Calu3 (cell line): ENCODE measurements at regions of chr10 and their contacts with region 1.

Region 1: GRCh38 chr10:5199398-5199797 is 2.8 kb downstream of the AKR1C4 start:
- DNase-seq: no peak
- H3K4me3 Mint-ChIP-seq: no peak overlapping the region
- H3K27ac Mint-ChIP-seq: no peak overlapping the region
- H3K4me1 Mint-ChIP-seq: peaks cover 18% of the 10 kb centered on the region
- H3K27me3 Mint-ChIP-seq: no peaks in the 10 kb centered on the region
- CTCF ChIP-seq: no peak

Region 2: DNA sequence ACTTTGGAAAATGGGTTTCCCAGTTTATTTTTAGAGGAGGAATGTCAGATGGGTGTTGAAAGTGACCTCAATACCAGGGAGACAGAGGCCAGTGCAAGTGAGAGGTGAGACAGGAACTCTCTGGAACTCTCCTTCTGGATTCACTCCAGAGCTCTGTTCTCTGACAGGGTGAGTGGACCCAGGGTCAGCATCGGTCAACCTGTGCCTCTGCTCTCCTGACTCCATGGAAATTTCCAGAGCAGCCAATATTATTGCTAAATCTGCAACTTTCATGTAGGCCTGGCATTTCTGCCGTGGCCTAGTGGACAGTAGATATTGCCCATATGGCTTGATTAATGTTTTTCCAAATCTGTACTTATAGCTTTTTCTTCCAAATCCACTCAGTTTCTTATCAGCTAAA is 17.4 kb after region 1 on chr10:
- CTCF ChIA-PET with region 1: interaction called, 3 read pairs
- intact Hi-C with region 1: loop called (anchors 2 kb)
- DNase-seq: no peak
- H3K4me3 Mint-ChIP-seq: no peak overlapping the region
- H3K27ac Mint-ChIP-seq: no peak overlapping the region
- H3K4me1 Mint-ChIP-seq: peaks cover 18% of the 10 kb centered on the region
- H3K27me3 Mint-ChIP-seq: no peaks in the 10 kb centered on the region
- CTCF ChIP-seq: no peak